ENCODE measurements at regions of chr6 and their contacts with region 1.

Region 1: GRCh38 chr6:722077-722524 is 29.2 kb upstream of the EXOC2 start:
- DNase-seq: peak; percentile 61
- ATAC-seq: peak; percentile 97
- H3K4me3 ChIP-seq: no peak overlapping the region
- H3K27ac ChIP-seq: no peak overlapping the region
- H3K4me1 ChIP-seq: peaks cover 0 to 4% of the 10 kb centered on the region in 2 experiments; a peak in 2 of 4 replicates
- H3K27me3 ChIP-seq: no peaks in the 10 kb centered on the region
- CTCF ChIP-seq: peak; percentile 69 to 94 (median 93)
- POLR2A ChIP-seq: no peak
- RAD21 ChIP-seq: peak; percentile 66

Region 2: DNA sequence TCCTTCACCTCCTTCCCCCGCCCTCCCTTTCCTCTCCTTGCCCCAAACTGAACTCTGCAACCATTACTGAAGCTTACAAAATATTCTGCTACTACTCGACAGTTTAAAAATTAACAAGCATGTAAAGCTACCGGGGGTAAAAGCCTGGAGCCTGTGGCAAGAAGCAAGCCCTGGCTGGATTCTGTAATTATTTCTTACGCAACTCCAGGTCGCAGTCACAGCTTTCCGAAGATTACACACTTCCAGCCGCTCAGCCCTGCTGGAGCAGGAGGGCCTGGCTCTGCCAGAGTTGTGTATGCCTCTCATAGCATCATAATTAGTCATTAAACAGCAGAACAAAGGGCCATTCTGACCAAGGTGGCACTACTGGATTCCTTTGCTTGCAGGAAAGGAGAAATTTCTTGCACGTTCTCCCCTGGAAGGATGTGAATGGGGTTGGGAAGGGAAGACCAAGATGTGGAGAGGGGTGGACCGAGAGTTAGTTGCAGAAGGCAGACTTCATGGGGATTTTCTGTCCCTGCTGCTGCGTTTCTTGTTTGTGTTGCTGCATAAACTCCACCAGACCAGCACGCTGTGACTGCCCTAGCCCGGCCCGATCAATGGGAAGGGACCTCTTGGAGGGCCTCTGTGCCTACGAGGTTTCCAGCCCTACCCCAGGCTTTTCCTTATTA is 613.4 kb after region 1 on chr6:
- CTCF ChIA-PET with region 1: interaction called, 6 read pairs
- POLR2A ChIA-PET with region 1: no interaction called
- RAD21 ChIA-PET with region 1: no interaction called
- intact Hi-C with region 1: loop called (anchors 1 kb)
- DNase-seq: peak; percentile 87
- ATAC-seq: peak; percentile 92
- H3K4me3 ChIP-seq: peak overlapping the region; percentile 10 to 40; a peak in 3 of 4 replicates
- H3K27ac ChIP-seq: peak overlapping the region; percentile 63
- H3K4me1 ChIP-seq: peaks cover 9 to 33% of the 10 kb centered on the region in 2 experiments; a peak in 3 of 4 replicates
- H3K27me3 ChIP-seq: no peaks in the 10 kb centered on the region
- CTCF ChIP-seq: no peak
- POLR2A ChIP-seq: no peak
- RAD21 ChIP-seq: peak; percentile 48

Region 3: GRCh38 chr6:1381481-1382330 is 659.6 kb after region 1 on chr6:
- CTCF ChIA-PET with region 1: interaction called, 7 read pairs
- POLR2A ChIA-PET with region 1: no interaction called
- RAD21 ChIA-PET with region 1: no interaction called
- intact Hi-C with region 1: loop called (anchors 5 kb)
- DNase-seq: no peak
- ATAC-seq: peak; percentile 95
- H3K4me3 ChIP-seq: peak overlapping the region in 1 of 2 experiments; percentile 26; a peak in 1 of 4 replicates
- H3K27ac ChIP-seq: no peak overlapping the region
- H3K4me1 ChIP-seq: peaks cover 0 to 8% of the 10 kb centered on the region in 2 experiments; a peak in 1 of 4 replicates
- H3K27me3 ChIP-seq: no peaks in the 10 kb centered on the region
- CTCF ChIP-seq: peak; percentile 44 to 69 (median 68); a peak in 4 of 6 replicates
- POLR2A ChIP-seq: no peak
- RAD21 ChIP-seq: peak; percentile 76

Region 4: GRCh38 chr6:1436334-1437306 is 714.5 kb after region 1 on chr6:
- CTCF ChIA-PET with region 1: interaction called, 5 read pairs
- POLR2A ChIA-PET with region 1: no interaction called
- RAD21 ChIA-PET with region 1: no interaction called
- intact Hi-C with region 1: loop called (anchors 1 kb)
- DNase-seq: peak; percentile 57
- ATAC-seq: peak; percentile 97
- H3K4me3 ChIP-seq: no peak overlapping the region
- H3K27ac ChIP-seq: no peak overlapping the region
- H3K4me1 ChIP-seq: peaks cover 0 to 5% of the 10 kb centered on the region in 2 experiments; a peak in 2 of 4 replicates
- H3K27me3 ChIP-seq: peaks cover 5% of the 10 kb centered on the region; the same call in 1 of the 2 replicates
- CTCF ChIP-seq: peak; percentile 61 to 84 (median 72)
- POLR2A ChIP-seq: no peak
- RAD21 ChIP-seq: peak; percentile 81

Measured in HCT116 (cell line).